Pancreas (tissue), 10 donors: ENCODE measurements at regions of chr3 and their contacts with region 1.

Region 1: GRCh38 chr3:132641837-132642538 is 17.6 kb downstream of the ACAD11 start:
- DNase-seq: no peak
- ATAC-seq: peak; percentile 67 to 92 (median 87)
- H3K4me3 ChIP-seq: no peak overlapping the region
- H3K27ac ChIP-seq: no peak overlapping the region
- H3K4me1 ChIP-seq: peaks cover 0 to 8% (median 0%) of the 10 kb centered on the region in 3 donors
- H3K27me3 ChIP-seq: no peaks in the 10 kb centered on the region
- CTCF ChIP-seq: peak; percentile 48 to 74 (median 68)

Region 2: DNA sequence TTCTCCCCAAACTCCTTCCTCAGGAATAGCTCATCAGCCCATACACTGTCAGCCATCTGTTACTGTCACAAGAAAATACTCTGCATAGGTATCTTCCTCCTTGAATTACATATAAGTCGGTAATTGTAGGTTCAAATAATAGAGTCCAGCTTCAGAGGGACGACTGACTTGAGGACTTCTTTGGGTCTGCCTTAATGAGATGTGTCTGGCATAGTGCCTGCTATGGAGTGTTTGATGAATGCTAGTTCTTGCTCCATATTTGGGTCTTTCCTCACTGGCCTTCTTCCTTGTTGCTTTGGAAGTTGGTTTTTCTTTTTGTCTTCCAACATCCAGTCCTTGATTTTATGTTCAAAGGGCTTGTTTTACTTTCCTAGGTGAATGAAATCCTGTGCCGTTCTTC is 111.4 kb before region 1 on chr3:
- intact Hi-C with region 1: loop called (anchors 5 to 10 kb)
- DNase-seq: no peak
- ATAC-seq: no peak
- H3K4me3 ChIP-seq: no peak overlapping the region
- H3K27ac ChIP-seq: no peak overlapping the region
- H3K4me1 ChIP-seq: no peaks in the 10 kb centered on the region
- H3K27me3 ChIP-seq: no peaks in the 10 kb centered on the region
- CTCF ChIP-seq: no peak

Region 3: DNA sequence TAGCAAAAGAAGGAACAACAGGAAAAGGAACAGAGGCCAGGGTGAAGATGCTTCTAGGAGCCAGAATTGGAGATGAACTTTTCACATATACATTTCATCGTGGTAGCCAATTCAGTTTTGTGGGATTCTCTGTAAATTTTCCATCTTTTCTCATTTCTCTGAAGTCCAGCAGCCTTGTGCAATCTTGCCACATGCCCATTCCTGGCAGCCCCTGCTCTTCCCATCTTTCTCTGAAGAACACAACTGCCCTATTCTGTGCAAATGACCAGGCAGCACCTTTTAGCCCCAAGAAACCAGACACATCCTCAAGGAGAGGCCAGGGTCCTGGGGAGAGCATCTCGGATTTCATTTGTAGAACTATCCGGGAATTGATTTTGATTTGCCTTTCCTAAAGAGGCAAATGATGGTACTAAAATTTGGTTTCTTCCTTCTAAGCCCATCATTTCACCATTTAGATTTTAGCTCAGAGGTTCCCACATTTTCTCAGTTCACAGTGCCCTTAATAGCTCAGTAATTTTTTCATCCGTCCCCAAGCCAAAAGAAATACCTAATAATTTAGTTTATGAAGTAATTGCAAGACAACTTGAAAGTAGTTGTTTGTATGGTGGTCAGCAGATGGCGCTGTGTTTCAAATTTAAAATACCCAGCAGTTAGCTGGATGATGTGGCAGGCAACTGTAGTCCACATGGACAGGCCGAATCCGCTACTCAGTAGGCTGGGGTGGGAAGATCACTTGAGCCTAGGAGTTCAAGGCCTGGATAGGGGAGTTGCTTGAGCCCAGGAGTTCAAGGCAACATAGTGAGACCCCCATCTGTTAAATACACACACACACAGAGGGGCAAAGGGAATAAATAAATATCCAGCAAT is 106.2 kb before region 1 on chr3:
- intact Hi-C with region 1: loop called (anchors 5 to 10 kb)
- DNase-seq: peak in 4 of 6 donors; percentile 46 to 75 (median 58)
- ATAC-seq: peak; percentile 83 to 94 (median 90)
- H3K4me3 ChIP-seq: no peak overlapping the region
- H3K27ac ChIP-seq: no peak overlapping the region
- H3K4me1 ChIP-seq: peaks cover 5 to 8% (median 7%) of the 10 kb centered on the region in 3 donors
- H3K27me3 ChIP-seq: no peaks in the 10 kb centered on the region
- CTCF ChIP-seq: peak; percentile 27 to 58 (median 48)